ENCODE measurements at regions of chr12 and their contacts with region 1.

Region 1: DNA sequence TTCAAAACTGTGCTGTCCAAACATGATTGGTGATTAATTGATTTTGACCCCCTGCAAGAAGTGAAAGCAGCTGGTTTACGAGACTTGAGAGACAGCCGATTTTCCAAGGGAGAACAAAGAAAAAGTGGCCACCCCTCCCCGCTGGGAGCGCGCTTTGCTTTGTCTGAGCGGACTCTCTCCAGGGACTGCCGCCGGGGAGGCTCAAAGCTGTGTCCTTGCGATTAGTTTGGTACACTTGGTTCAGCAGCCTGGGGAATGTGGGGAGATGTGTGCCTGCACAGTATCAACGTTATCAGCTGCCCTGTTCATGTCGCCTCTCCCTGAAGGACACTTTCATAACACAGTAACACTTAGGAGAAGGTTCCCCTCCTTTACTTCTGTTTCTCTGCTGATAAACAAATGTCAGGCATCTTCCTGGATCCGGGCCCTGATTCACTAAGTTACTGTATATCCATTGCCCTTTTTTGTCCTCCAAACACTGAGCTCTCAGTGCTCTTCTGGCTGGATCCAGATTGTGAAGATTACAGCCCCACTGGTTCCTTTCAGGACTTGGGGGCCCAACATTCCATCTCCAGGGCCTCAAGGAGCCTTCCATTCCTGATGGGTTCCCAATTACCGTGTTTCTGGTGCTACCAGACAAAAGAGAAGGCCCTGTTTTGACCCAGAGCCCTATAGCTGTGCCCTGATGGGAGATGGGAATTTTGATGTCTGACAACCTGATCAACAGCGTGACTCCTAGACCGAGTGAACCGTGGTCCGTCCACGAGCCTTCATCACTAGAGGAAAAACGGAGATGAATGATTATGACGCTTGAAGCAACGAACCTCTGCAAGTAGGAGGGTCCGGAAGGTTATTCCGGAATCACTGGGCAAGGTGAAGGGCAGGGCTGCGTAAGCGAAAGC is 31.7 kb upstream of the TUBA1C start:
- DNase-seq: peak; percentile 40 to 76
- H3K4me3 ChIP-seq: peak overlapping the region; percentile 27 to 55
- H3K27ac ChIP-seq: peak overlapping the region; percentile 78 to 90
- H3K4me1 ChIP-seq: peaks cover 0 to 27% (median 23%) of the 10 kb centered on the region in 4 donors
- H3K27me3 ChIP-seq: no peaks in the 10 kb centered on the region
- CTCF ChIP-seq: peak in 1 of 2 experiments; percentile 19

Region 2: DNA sequence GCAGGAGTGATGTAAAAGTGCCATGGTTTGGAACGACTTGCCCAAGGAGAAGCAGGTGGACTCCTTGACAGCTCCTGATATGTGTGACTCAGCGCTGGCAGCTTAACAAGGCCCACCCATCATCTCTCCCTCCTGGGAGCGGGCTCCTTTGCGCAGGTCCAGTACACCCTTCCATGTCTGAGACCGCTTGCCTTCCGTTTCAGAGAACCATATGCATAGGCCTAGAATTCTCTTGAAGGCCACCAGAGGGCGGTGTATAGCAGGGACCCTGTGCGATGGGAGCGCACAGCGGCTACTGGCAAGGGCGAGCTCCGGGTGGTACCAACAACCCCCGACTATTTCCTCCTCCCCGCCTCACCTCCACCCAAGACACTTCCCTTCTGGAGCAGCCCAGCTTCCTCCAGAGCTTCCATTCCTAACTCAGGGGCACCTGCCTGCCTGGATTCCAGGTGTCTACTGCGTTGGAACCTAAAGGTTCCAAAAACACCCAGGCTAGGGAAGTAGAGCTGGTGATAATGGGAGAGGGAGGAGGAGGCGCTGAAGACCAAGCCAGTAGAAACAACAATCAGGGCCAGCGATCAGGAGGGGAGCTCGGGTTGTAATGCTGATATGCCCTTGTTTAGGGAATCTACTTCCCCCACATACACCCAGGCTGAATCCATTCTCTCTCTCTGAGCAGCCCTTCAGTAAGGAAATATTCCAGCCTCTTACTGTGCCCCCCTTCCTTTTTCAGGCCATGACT is 144.8 kb before region 1 on chr12:
- intact Hi-C with region 1: loop called (anchors 2 kb)
- DNase-seq: peak; percentile 51 to 84
- H3K4me3 ChIP-seq: peak overlapping the region in 1 of 2 donors; percentile 7
- H3K27ac ChIP-seq: no peak overlapping the region
- H3K4me1 ChIP-seq: peaks cover 0 to 38% (median 35%) of the 10 kb centered on the region in 4 donors
- H3K27me3 ChIP-seq: peaks cover 0 to 47% of the 10 kb centered on the region in 2 donors
- CTCF ChIP-seq: peak; percentile 87 to 91

Region 3: GRCh38 chr12:49130151-49131050 is 102.8 kb before region 1 on chr12:
- intact Hi-C with region 1: loop called (anchors 5 kb)
- DNase-seq: peak; percentile 94 to 97
- H3K4me3 ChIP-seq: peak overlapping the region; percentile 75 to 100
- H3K27ac ChIP-seq: peak overlapping the region; percentile 97 to 100
- H3K4me1 ChIP-seq: peaks cover 0 to 37% (median 20%) of the 10 kb centered on the region in 4 donors
- H3K27me3 ChIP-seq: no peaks in the 10 kb centered on the region
- CTCF ChIP-seq: peak; percentile 90 to 92

Region 4: DNA sequence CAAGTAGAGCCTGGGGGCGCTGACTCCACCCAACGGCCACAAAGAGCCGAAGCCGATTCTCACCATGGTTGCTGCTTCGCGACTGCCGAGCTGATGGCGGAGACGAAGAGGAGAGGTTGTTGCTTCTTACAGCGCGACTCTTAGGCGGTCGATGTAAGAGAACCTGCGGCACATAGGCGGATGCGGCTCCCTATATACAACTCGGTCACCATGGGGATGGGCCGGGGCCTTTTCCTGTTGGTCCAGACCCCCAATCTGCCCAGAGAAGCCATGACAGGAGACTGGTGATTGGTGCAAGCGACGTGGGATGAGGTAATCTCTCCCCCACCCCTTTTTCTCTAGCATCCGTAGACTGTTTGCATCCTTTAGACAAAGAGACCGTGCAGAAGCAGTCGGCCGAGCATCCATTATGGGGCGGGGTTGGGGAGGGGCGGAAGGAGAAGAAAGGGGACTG is 44.2 kb before region 1 on chr12 and contains the start of gene TUBA1A:
- intact Hi-C with region 1: loop called (anchors 2 kb)
- DNase-seq: peak; percentile 96
- H3K4me3 ChIP-seq: peak within 1 kb of the TSS; percentile 93 to 98
- H3K27ac ChIP-seq: peak within 1 kb of the TSS; percentile 99 to 100
- H3K4me1 ChIP-seq: peaks cover 0 to 19% (median 4%) of the 10 kb centered on the region in 4 donors
- H3K27me3 ChIP-seq: no peaks in the 10 kb centered on the region
- CTCF ChIP-seq: no peak

Measured in tibial artery (tissue), 4 donors.